ENCODE measurements at regions of chrX and their contacts with region 1.

Region 1: GRCh38 chrX:44872817-44873414 is at the start of gene KDM6A:
- DNase-seq: peak; percentile 89 to 100 (median 96)
- ATAC-seq: peak; percentile 90
- H3K4me3 ChIP-seq: peak within 1 kb of the TSS; percentile 73 to 79
- H3K4me3 Mint-ChIP-seq: peak within 1 kb of the TSS; percentile 96
- H3K27ac ChIP-seq: peak within 1 kb of the TSS; percentile 84 to 96
- H3K27ac Mint-ChIP-seq: peak within 1 kb of the TSS; percentile 97
- H3K4me1 ChIP-seq: peaks cover 20% of the 10 kb centered on the region
- H3K4me1 Mint-ChIP-seq: peaks cover 21% of the 10 kb centered on the region
- H3K27me3 ChIP-seq: no peaks in the 10 kb centered on the region
- H3K27me3 Mint-ChIP-seq: no peaks in the 10 kb centered on the region
- CTCF ChIP-seq: no peak
- total RNA-seq, gene KDM6A: 61.5 to 63.5 TPM

Region 2: GRCh38 chrX:44922980-44923379 is 50.1 kb after region 1 on chrX:
- CTCF ChIA-PET with region 1: no interaction called
- POLR2A ChIA-PET with region 1: no interaction called
- intact Hi-C with region 1: loop called in 1 of 2 experiments (anchors 10 kb)
- DNase-seq: peak in 2 of 9 experiments; percentile 16 to 47
- ATAC-seq: peak; percentile 73
- H3K4me3 ChIP-seq: no peak overlapping the region
- H3K4me3 Mint-ChIP-seq: peak overlapping the region; percentile 68
- H3K27ac ChIP-seq: no peak overlapping the region
- H3K27ac Mint-ChIP-seq: peak overlapping the region; percentile 69
- H3K4me1 ChIP-seq: peaks cover 25% of the 10 kb centered on the region
- H3K4me1 Mint-ChIP-seq: peaks cover 67% of the 10 kb centered on the region
- H3K27me3 ChIP-seq: no peaks in the 10 kb centered on the region
- H3K27me3 Mint-ChIP-seq: no peaks in the 10 kb centered on the region
- CTCF ChIP-seq: no peak

Region 3: DNA sequence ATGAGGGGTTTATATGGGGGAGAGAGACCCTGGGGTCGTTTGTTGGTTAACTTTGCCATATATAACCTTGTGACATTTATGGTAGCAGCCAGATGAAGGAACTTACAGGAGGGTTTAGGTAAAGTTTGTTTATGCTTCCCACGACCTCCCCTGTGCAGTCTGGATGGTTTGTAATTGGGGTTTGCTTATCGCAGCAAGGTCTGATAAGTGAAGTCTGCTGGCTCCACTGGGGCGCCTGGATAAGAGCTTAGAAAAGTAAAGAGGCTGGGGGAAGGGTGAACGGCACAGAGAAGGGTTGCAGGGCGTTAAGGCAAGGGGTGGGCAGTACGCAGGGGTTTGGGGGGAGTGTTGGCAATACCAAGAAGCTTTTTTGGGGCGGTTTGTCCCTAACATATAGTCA is 98.8 kb after region 1 on chrX:
- CTCF ChIA-PET with region 1: no interaction called
- POLR2A ChIA-PET with region 1: no interaction called
- intact Hi-C with region 1: no loop called
- DNase-seq: no peak
- ATAC-seq: no peak
- H3K4me3 ChIP-seq: no peak overlapping the region
- H3K4me3 Mint-ChIP-seq: no peak overlapping the region
- H3K27ac ChIP-seq: no peak overlapping the region
- H3K27ac Mint-ChIP-seq: no peak overlapping the region
- H3K4me1 ChIP-seq: no peaks in the 10 kb centered on the region
- H3K4me1 Mint-ChIP-seq: peaks cover 40% of the 10 kb centered on the region
- H3K27me3 ChIP-seq: no peaks in the 10 kb centered on the region
- H3K27me3 Mint-ChIP-seq: no peaks in the 10 kb centered on the region
- CTCF ChIP-seq: no peak

Region 4: GRCh38 chrX:45070116-45071007 is 197.4 kb after region 1 on chrX:
- CTCF ChIA-PET with region 1: interaction called, 7 read pairs
- POLR2A ChIA-PET with region 1: interaction called, 3 read pairs
- intact Hi-C with region 1: loop called (anchors 5 kb)
- DNase-seq: peak in 2 of 9 experiments; percentile 50 to 65
- ATAC-seq: peak; percentile 58
- H3K4me3 ChIP-seq: no peak overlapping the region
- H3K4me3 Mint-ChIP-seq: no peak overlapping the region
- H3K27ac ChIP-seq: peak overlapping the region in 1 of 2 experiments; percentile 55
- H3K27ac Mint-ChIP-seq: peak overlapping the region; percentile 18
- H3K4me1 ChIP-seq: peaks cover 17% of the 10 kb centered on the region
- H3K4me1 Mint-ChIP-seq: peaks cover 53% of the 10 kb centered on the region
- H3K27me3 ChIP-seq: no peaks in the 10 kb centered on the region
- H3K27me3 Mint-ChIP-seq: no peaks in the 10 kb centered on the region
- CTCF ChIP-seq: peak; percentile 58

Region 5: DNA sequence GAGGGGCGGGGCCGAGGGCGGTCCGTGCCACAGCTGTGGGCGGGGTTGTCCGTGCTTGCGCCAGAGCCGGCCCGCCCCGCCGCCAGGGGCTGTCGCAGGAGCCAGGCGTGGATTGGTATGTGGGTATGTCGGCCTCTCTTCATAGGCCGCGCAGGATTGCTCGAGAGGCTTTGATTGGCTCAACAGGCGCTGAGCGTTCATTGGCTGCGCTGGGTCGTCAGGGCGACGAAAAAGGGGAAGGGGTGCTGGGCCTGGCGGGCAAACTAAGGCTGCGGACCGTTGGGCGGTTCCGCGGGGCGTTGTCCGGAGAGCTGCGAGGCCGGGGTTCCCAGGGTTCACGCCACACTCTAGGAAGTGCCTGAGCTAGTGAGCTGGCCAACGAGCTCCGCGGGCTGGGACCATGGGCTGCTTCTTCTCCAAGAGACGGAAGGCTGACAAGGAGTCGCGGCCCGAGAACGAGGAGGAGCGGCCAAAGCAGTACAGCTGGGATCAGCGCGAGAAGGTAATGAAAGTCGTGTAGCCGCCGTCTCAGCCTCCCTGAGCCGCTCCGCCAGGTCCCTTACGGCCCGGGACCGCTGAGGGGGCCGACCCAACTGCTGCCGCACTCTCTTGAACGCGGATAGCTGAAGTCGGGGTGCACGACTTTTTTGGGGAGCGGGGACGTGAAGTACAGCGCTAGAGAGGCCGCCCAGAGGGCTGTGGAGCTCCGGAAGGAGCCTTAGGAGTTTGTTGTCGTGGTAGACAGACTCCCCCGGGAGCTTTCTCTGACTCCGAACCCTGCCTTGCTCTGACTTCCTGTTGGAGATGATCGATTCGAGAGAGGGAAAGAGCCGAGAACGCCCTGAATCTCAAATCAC is 1964.0 kb after region 1 on chrX and contains the start of gene RP2:
- CTCF ChIA-PET with region 1: no interaction called
- POLR2A ChIA-PET with region 1: no interaction called
- intact Hi-C with region 1: loop called in 1 of 2 experiments (anchors 10 kb)
- DNase-seq: peak; percentile 61 to 92 (median 86)
- ATAC-seq: peak; percentile 95
- H3K4me3 ChIP-seq: peak within 1 kb of the TSS; percentile 95 to 96
- H3K4me3 Mint-ChIP-seq: peak within 1 kb of the TSS; percentile 97
- H3K27ac ChIP-seq: peak within 1 kb of the TSS; percentile 82 to 91
- H3K27ac Mint-ChIP-seq: peak within 1 kb of the TSS; percentile 95
- H3K4me1 ChIP-seq: peaks cover 15% of the 10 kb centered on the region
- H3K4me1 Mint-ChIP-seq: peaks cover 24% of the 10 kb centered on the region
- H3K27me3 ChIP-seq: no peaks in the 10 kb centered on the region
- H3K27me3 Mint-ChIP-seq: no peaks in the 10 kb centered on the region
- CTCF ChIP-seq: no peak
- total RNA-seq, gene RP2: 4.4 to 4.9 TPM